Left ventricle myocardium inferior (tissue), 1 donor: ENCODE measurements at regions of chr10 and their contacts with region 1.

Region 1: DNA sequence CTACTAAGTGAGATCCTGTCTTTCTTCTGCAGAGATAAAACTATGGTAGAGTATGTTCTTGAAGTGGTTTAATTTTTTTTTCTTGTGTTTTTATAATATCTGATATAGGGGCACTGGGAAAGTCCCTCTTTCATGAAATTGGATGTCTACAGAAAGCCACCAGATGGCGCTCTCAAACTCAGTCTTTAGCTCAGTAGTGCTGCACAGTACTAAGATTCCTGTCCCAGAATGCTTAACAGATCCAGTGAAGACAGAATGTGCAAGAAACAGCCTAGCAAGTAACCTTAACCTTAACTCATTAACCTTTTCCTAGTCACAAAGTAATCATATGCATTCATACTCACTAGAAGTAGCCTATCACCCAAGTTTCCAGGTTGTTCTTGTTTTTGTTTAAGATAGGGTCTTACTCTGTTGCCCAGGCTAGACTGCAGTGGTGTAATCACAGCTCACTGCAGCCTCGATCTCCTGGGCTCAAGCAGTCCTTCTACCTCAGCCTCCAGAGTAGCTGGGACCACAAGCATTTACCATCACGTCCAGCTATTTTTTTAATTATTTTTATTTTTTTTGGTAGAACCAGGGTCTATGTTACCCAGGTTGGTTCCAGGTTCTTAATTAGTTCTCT is 56.7 kb downstream of the IDE start:
- DNase-seq: no peak
- H3K4me3 ChIP-seq: no peak overlapping the region
- H3K27ac ChIP-seq: no peak overlapping the region
- H3K4me1 ChIP-seq: peaks cover 3% of the 10 kb centered on the region
- H3K27me3 ChIP-seq: no peaks in the 10 kb centered on the region
- CTCF ChIP-seq: peak; percentile 89

Region 2: DNA sequence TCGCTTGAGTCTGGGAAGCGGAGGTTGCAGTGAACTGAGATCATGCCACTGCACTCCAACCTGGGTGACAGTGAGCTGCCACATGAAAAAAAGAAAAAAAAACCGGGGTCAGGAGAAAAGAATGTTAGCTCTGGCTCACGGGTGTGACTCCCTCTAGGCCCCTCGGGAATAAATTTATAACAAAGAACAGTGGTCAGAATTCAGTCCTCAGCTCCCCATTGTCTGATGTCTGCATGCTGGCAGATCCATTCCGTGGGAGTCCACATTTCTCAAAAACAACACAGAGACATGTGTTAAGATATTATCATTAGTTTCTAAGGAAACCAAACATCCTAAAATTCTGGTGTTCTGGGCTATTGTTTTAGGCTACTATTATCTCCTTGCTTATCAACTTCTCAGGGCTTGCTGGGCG is 135.6 kb before region 1 on chr10:
- intact Hi-C with region 1: no loop called
- DNase-seq: no peak
- H3K4me3 ChIP-seq: no peak overlapping the region
- H3K27ac ChIP-seq: peak overlapping the region; percentile 72
- H3K4me1 ChIP-seq: peaks cover 16% of the 10 kb centered on the region
- H3K27me3 ChIP-seq: peaks cover 8% of the 10 kb centered on the region
- CTCF ChIP-seq: no peak

Region 3: DNA sequence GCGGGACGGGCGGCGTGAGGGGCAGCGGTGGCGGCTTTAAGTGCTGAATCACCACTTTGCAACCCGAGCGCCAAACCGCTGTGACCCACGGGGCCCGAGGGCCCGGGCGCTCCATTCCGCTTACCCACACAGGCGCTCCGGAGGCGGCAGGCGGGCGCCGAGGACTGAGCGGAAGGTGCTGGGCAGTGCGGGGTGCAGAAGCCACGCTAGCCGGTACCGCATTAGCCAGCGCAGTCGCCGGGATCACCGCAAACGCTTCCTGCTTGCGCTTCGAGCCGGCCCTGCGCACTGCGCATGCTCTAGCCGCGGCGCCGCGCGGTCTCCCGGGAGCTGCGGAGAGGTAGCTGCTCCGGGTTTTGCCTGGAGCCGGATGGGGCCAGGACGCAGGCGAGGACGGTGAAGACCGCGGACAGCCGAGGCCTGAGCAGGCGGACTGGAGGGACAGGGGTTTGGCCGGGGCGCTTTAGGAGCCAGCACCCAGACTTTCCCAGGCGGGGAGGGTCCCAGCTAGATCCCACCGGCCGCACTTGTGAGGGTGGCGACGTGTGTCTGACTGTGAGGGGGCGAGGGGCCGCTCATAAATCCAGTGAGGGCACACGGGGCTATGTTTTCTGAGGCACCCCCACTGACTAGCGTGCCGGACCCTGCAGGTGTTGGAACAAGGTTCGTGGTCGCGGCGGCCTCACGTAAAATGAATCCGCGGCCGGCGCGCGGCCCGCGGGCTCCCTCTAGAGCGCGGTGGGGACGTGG is 56.8 kb after region 1 on chr10 and contains the start of gene IDE:
- intact Hi-C with region 1: loop called (anchors 5 kb)
- DNase-seq: peak; percentile 90
- H3K4me3 ChIP-seq: peak within 1 kb of the TSS; percentile 97
- H3K27ac ChIP-seq: peak within 1 kb of the TSS; percentile 98
- H3K4me1 ChIP-seq: peaks cover 54% of the 10 kb centered on the region
- H3K27me3 ChIP-seq: no peaks in the 10 kb centered on the region
- CTCF ChIP-seq: peak; percentile 87
- total RNA-seq, gene IDE: 42.1 TPM

Region 4: DNA sequence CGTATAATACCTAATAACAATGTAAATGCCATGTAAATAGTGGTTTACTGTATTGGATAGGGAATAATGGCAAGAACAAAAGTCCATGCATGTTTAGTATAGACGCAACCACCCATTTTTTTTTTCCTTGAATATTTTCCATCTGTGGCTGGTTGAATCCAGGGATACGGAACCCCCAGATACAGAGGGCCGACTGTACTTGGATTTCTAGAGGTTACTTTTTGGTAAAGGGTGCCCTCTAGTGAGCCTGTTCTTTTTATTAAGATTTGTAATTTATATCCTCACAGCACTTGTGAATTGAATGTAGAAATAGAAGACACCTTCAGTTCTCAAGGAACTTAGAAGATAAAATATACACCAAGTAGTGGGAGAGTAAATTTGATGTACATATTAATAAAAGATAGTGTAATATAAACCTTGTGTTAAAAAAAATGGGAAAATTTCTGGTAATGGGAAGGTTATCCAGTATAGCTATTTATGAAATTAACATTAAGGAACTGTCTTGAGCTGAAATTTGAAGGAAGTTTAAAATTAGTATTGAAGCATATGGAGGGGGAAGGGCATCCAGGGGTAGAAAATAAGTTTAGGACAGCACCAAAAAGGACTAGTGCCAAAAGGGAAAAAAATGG is 363.2 kb after region 1 on chr10:
- intact Hi-C with region 1: loop called (anchors 10 kb)
- DNase-seq: no peak
- H3K4me3 ChIP-seq: no peak overlapping the region
- H3K27ac ChIP-seq: no peak overlapping the region
- H3K4me1 ChIP-seq: peaks cover 15% of the 10 kb centered on the region
- H3K27me3 ChIP-seq: no peaks in the 10 kb centered on the region
- CTCF ChIP-seq: peak; percentile 63